ENCODE measurements at regions of chr5 and their contacts with region 1.

Region 1: DNA sequence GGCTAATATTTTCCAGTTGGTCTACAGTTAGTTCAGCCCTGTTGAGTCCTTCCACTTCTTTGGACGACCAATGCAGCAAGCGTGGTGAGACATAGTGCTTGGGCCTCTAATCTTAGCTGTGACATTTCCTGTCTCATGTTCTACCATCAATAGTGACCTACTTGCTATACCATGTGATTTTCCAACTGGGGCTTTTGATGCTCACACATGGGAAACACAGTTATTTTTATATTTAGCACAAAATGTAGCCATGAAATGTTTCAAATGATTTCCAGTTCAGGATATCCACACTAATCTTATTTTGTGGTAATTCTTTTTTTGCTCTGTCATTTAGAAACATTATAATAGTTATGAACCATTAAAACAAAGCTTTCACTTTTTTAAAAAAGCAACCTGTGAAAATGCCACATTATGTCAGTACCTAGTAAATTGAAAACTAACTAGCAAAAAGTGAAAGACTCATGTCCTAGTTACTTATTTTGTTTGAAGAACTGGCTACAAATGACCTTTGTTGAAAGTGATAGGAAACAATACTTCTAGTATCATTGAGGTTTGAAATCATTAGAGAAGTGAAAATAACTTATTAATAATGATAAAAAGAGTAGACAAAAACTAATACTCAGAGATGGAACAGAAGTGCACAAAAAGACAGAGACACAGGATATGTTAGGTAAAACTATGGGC is 18.3 kb downstream of the MARCHF3 start:
- DNase-seq: peak; percentile 35
- H3K4me3 Mint-ChIP-seq: no peak overlapping the region
- H3K27ac Mint-ChIP-seq: peak overlapping the region; percentile 78
- H3K4me1 Mint-ChIP-seq: peaks cover 56% of the 10 kb centered on the region
- H3K27me3 Mint-ChIP-seq: no peaks in the 10 kb centered on the region

Region 2: GRCh38 chr5:126253406-126253805 is 758.7 kb before region 1 on chr5:
- CTCF ChIA-PET with region 1: no interaction called
- intact Hi-C with region 1: no loop called
- DNase-seq: no peak
- H3K4me3 Mint-ChIP-seq: no peak overlapping the region
- H3K27ac Mint-ChIP-seq: no peak overlapping the region
- H3K4me1 Mint-ChIP-seq: no peaks in the 10 kb centered on the region
- H3K27me3 Mint-ChIP-seq: no peaks in the 10 kb centered on the region

Region 3: DNA sequence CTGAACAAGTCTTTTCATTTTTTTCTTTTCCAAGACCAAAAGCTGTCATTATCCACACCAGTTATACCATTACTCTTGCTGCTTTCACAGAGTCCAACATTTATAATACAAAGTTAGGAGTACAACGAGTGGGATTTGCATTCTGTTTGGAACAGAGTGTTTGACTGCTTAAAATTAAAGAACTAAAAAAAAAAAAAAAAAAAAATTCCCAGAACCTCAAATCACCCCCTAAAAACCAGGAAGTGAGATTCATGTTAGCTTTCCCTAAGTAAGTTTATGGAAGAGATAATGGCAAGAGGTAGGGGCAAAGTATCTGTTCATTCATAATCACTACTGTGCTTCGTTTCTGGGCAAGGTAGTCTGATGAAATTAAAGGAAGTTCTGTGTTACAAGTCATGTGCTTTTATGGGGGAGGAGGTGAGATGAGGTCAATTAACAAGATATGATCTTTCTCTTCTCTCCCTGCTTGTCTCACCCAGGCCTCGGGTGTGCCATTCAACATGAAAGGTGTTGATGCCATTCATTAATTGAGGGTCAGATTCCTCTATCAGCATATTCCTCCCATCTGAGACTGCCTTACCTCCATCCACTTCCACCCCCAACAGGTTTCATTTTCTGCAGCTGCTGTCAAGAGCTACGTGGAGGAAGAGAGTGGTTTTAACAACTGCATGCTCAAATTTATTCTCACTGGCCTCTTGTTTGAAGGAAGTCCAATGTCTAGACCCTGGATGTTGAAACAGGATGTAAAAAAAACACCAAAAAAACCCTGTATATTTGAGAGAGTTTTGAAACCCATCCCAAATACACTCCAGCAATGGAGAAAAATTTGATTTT is 39.8 kb before region 1 on chr5:
- CTCF ChIA-PET with region 1: interaction called, 3 read pairs
- intact Hi-C with region 1: loop called (anchors 1 kb)
- DNase-seq: peak; percentile 45
- H3K4me3 Mint-ChIP-seq: peak overlapping the region; percentile 70
- H3K27ac Mint-ChIP-seq: peak overlapping the region; percentile 94
- H3K4me1 Mint-ChIP-seq: peaks cover 37% of the 10 kb centered on the region
- H3K27me3 Mint-ChIP-seq: no peaks in the 10 kb centered on the region

Region 4: GRCh38 chr5:126994485-126994884 is 17.6 kb before region 1 on chr5:
- CTCF ChIA-PET with region 1: interaction called, 3 read pairs
- intact Hi-C with region 1: loop called (anchors 1 kb)
- DNase-seq: peak; percentile 50
- H3K4me3 Mint-ChIP-seq: no peak overlapping the region
- H3K27ac Mint-ChIP-seq: no peak overlapping the region
- H3K4me1 Mint-ChIP-seq: peaks cover 44% of the 10 kb centered on the region
- H3K27me3 Mint-ChIP-seq: no peaks in the 10 kb centered on the region